ENCODE measurements at regions of chr12 and their contacts with region 1.

Region 1: DNA sequence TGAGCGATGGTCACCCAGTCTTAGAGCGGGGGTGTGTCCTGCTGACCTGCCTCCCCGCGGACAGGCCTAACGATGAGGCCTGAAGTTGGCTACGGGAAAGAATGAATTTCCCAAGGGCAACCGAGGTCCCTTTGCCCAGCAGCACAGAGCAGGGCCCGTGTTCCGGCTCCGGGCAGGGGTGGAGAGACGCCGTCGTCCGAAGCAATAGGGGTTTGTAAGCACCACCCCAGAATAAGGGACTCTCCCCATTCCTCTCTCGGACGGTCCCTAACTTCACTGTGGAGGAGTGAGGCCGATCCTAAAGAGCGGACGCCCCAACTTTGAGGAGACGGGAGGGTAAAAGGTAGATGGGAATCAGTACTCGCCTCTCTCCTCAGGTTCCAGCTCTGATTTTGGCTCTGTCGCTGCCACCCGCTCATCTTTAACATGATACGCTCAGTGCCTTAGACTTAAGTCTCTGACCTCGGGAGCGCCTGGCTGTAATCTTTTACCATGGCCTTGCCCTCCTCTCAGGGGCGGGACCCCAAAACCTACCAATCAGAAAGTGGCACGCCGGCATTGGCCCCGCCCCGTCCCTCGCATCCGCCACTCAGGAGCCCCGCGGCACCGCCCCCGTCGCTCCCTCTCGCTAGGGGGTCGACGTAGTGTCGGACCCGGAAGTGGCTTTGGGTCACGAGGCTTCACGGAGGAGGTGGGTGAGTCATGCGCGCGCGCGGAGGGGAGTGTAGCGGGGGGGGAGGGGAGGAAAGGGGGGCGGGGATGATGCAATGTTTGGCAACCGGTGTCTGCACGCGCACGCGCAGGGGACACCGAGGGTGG is at the start of gene DDIT3:
- DNase-seq: peak; percentile 100
- ATAC-seq: peak; percentile 84 to 91 (median 88)
- H3K4me3 ChIP-seq: peak within 1 kb of the TSS; percentile 64 to 99 (median 80)
- H3K27ac ChIP-seq: peak within 1 kb of the TSS; percentile 94 to 100 (median 98)
- H3K4me1 ChIP-seq: peaks cover 0 to 78% (median 57%) of the 10 kb centered on the region in 12 donors
- H3K27me3 ChIP-seq: no peaks in the 10 kb centered on the region
- CTCF ChIP-seq: no peak
- POLR2A ChIP-seq: peak; percentile 95 to 99
- total RNA-seq, gene DDIT3: 11.5 to 30.9 (median 17.5) TPM

Region 2: GRCh38 chr12:56688129-56688845 is 832.0 kb before region 1 on chr12 and contains the start of gene PTGES3:
- intact Hi-C with region 1: loop called in 1 of 10 experiments (anchors 5 kb)
- DNase-seq: peak; percentile 97 to 99 (median 98)
- ATAC-seq: peak; percentile 93 to 96 (median 94)
- H3K4me3 ChIP-seq: peak within 1 kb of the TSS; percentile 63 to 96 (median 86)
- H3K27ac ChIP-seq: peak within 1 kb of the TSS; percentile 93 to 100 (median 98)
- H3K4me1 ChIP-seq: peaks cover 0 to 43% (median 33%) of the 10 kb centered on the region in 12 donors
- H3K27me3 ChIP-seq: no peaks in the 10 kb centered on the region
- CTCF ChIP-seq: no peak
- POLR2A ChIP-seq: peak in 1 of 2 donors; percentile 91
- total RNA-seq, gene PTGES3: 48.0 to 120 (median 103) TPM

Region 3: GRCh38 chr12:57462251-57462911 is 57.9 kb before region 1 on chr12:
- intact Hi-C with region 1: loop called in 1 of 10 experiments (anchors 1 kb)
- DNase-seq: peak; percentile 85 to 91 (median 85)
- ATAC-seq: peak; percentile 68 to 77 (median 74)
- H3K4me3 ChIP-seq: peak overlapping the region; percentile 53 to 82 (median 68)
- H3K27ac ChIP-seq: peak overlapping the region; percentile 37 to 86 (median 72)
- H3K4me1 ChIP-seq: peaks cover 0 to 41% (median 21%) of the 10 kb centered on the region in 12 donors
- H3K27me3 ChIP-seq: peaks cover 0 to 9% (median 0%) of the 10 kb centered on the region in 9 donors
- CTCF ChIP-seq: peak; percentile 89 to 99 (median 94)
- POLR2A ChIP-seq: peak in 1 of 2 donors; percentile 22

Region 4: DNA sequence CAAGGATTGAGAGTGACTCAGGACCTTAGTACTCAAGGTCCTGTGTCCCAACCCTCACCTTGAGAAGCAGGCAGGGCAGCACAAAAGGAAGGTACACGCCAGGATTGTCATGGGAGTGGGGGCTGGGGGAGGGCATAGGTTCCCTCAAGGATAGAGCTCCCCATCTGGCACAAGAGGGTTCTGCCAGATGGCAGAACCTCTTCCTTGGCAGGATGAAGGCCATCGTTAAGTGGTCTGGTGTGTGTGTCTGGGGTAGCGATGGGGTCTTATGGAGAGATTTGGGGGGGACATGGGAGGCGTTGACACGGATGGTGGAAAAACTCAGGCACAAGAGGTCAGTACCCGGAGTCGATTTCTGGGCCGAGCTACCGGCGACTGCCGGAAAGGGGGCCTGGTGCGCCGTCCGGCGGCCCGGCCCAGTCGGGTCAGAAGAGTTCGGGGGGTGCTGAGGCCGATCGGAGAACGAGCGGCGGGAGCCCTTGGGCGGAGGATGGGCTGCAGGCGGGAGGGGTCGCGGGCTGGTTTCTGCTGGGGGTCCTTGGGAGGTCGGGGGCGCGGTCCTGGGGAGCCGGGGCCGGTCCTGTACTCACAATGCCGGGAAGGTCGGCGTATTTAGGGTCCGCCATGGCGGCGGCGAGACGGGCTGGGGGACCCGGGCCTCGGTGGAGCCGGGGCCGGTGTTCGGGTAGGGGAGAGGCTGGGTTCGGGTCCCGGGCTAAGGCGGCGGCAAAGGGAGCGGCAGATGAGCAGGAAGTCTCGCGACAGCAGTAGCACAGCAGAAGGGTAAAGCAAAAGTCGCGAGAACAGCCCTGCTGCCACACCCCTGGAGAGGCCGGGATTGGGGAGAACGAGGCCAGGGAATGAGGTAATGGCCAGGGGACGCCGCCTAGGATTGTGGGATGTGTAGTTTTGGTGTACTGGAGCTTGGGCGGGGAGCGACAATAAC is 26.4 kb after region 1 on chr12 and contains the start of gene DCTN2:
- intact Hi-C with region 1: loop called in 2 of 10 experiments (anchors 2 kb)
- DNase-seq: peak; percentile 95 to 98 (median 97)
- ATAC-seq: peak; percentile 98 to 100 (median 99)
- H3K4me3 ChIP-seq: peak within 1 kb of the TSS; percentile 60 to 99 (median 93)
- H3K27ac ChIP-seq: peak within 1 kb of the TSS; percentile 63 to 93 (median 86)
- H3K4me1 ChIP-seq: peaks cover 0 to 48% (median 30%) of the 10 kb centered on the region in 12 donors
- H3K27me3 ChIP-seq: peaks cover 0 to 32% (median 22%) of the 10 kb centered on the region in 9 donors
- CTCF ChIP-seq: peak in 5 of 12 donors; percentile 4 to 10 (median 5)
- POLR2A ChIP-seq: peak in 1 of 2 donors; percentile 55
- total RNA-seq, gene DCTN2: 84.4 to 159 (median 109) TPM

Region 5: DNA sequence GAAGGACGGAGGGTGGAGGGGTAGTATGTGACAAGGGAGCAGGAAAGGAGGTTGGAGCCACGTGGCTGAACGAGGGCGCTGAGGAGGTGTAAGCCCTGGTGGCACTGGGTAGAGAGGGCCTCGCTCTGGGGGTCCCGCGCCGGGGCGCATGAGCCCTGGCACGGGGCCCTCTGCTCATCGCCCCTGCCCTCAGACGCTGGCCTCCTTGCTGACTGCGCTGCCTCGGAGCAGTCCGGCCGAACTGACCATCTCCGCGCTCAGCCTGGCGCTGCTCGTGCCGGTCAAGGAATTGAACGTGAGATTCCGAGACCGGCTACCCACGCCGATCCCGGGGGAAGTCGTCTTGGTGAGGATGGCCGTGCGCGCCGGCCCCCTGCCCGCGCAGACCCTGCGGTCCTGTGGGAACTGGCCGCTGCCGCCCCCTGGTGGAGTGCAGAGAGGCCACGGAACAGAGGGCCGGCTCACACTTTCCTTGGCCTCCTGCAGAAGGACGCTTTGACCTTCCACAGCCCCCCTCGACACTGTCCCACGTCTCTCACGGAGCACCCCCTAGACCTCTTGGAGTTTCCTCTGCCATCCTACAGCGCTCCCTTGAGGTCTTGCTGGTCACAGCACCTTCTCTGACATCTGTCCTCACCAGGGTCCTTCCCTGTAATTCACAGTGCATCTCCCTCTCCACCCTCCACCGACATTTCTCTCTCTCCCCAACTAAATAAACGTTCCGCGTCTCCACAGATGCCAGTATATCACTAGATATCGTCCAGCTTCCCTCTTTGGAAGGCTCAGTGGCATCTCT is 101.4 kb after region 1 on chr12:
- intact Hi-C with region 1: loop called in 1 of 10 experiments (anchors 2 kb)
- DNase-seq: peak in 4 of 5 donors; percentile 56 to 79 (median 73)
- ATAC-seq: peak; percentile 65 to 75 (median 70)
- H3K4me3 ChIP-seq: peak overlapping the region; percentile 20 to 66 (median 47)
- H3K27ac ChIP-seq: no peak overlapping the region
- H3K4me1 ChIP-seq: peaks cover 0 to 42% (median 17%) of the 10 kb centered on the region in 12 donors
- H3K27me3 ChIP-seq: peaks cover 6 to 72% (median 31%) of the 10 kb centered on the region in 9 donors
- CTCF ChIP-seq: peak; percentile 87 to 98 (median 94)
- POLR2A ChIP-seq: no peak